Activated T-helper 1 cell treated with anti-CD3 and anti-CD28 coated beads, Interleukin-12 subunit alpha, Interleukin-12 subunit beta, Interleukin-2, Interleukin-4 antibody, amounts not matched to agents 30 ng/mL and 10 ng/mL and 1 ng/mL, durations not matched to agents 14 hours and 24 hours and 36 hours (primary cell): ENCODE measurements at regions of chr9 and their contacts with region 1.

Region 1: GRCh38 chr9:74570879-74571512 is 73.9 kb downstream of the RORB start:
- DNase-seq: no peak
- H3K4me3 Mint-ChIP-seq: no peak overlapping the region
- H3K27ac Mint-ChIP-seq: no peak overlapping the region
- H3K4me1 Mint-ChIP-seq: no peaks in the 10 kb centered on the region
- H3K27me3 Mint-ChIP-seq: peaks cover 9% of the 10 kb centered on the region

Region 2: GRCh38 chr9:73200694-73201452 is 1370.1 kb before region 1 on chr9:
- intact Hi-C with region 1: loop called (anchors 1 kb)
- DNase-seq: no peak
- H3K4me3 Mint-ChIP-seq: no peak overlapping the region
- H3K27ac Mint-ChIP-seq: no peak overlapping the region
- H3K4me1 Mint-ChIP-seq: no peaks in the 10 kb centered on the region
- H3K27me3 Mint-ChIP-seq: peaks cover 6% of the 10 kb centered on the region

Region 3: GRCh38 chr9:73683862-73684591 is 887.0 kb before region 1 on chr9:
- intact Hi-C with region 1: loop called (anchors 5 kb)
- DNase-seq: no peak
- H3K4me3 Mint-ChIP-seq: no peak overlapping the region
- H3K27ac Mint-ChIP-seq: no peak overlapping the region
- H3K4me1 Mint-ChIP-seq: no peaks in the 10 kb centered on the region
- H3K27me3 Mint-ChIP-seq: no peaks in the 10 kb centered on the region

Region 4: GRCh38 chr9:74309654-74310053 is 261.3 kb before region 1 on chr9:
- intact Hi-C with region 1: loop called (anchors 10 kb)
- DNase-seq: no peak
- H3K4me3 Mint-ChIP-seq: no peak overlapping the region
- H3K27ac Mint-ChIP-seq: no peak overlapping the region
- H3K4me1 Mint-ChIP-seq: no peaks in the 10 kb centered on the region
- H3K27me3 Mint-ChIP-seq: no peaks in the 10 kb centered on the region